ENCODE measurements at regions of chr2 and their contacts with region 1.

Region 1: GRCh38 chr2:233251306-233252116 is at the start of gene ATG16L1:
- DNase-seq: peak; percentile 96 to 98 (median 97)
- H3K4me3 ChIP-seq: peak within 1 kb of the TSS; percentile 26 to 84 (median 50)
- H3K27ac ChIP-seq: peak within 1 kb of the TSS; percentile 59 to 93 (median 83)
- H3K4me1 ChIP-seq: peaks cover 7 to 24% of the 10 kb centered on the region in 2 donors
- H3K27me3 ChIP-seq: no peaks in the 10 kb centered on the region
- CTCF ChIP-seq: peak; percentile 81 to 94 (median 91)
- POLR2A ChIP-seq: peak; percentile 75 to 87
- total RNA-seq, gene ATG16L1: 10.9 to 37.7 (median 23.0) TPM

Region 2: DNA sequence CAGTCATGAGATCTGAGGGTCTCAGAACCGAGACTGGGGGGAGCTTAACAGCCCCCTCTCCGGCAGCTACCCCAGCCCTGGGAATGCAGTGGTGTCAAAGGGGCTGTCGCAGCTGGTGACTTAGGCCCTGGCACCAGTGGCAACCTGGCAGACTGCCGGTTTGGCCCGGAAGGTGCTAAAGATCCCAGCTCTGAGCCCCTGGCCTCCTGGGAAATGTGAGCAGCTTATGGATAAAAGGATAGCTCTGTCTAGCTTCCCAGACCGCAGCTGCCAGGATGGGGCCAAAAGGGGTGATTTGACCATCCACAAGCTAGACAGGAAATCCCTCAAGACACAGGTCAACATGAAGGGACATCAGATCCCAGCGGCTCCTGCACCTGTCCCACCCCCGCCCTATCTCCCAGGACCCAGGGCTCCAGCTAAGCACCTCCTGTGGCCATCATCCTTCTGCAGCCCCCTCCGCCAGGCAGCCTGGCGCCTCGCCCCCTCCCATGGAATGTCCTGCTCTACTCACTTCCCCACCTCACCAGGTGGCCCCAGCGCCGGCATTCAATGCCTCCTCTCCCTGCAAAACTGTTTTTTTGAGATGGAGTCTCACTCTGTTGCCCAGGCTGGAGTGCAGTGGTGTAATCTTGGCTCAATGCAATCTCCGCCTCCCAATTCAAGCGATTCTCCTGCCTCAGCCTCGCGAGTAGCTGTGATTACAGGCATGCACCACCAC is 651.3 kb before region 1 on chr2:
- intact Hi-C with region 1: loop called in 1 of 2 experiments (anchors 10 kb)
- DNase-seq: no peak
- H3K4me3 ChIP-seq: no peak overlapping the region
- H3K27ac ChIP-seq: no peak overlapping the region
- H3K4me1 ChIP-seq: no peaks in the 10 kb centered on the region
- H3K27me3 ChIP-seq: no peaks in the 10 kb centered on the region
- CTCF ChIP-seq: no peak
- POLR2A ChIP-seq: no peak

Region 3: GRCh38 chr2:233061591-233062450 is 189.7 kb before region 1 on chr2:
- intact Hi-C with region 1: loop called in 1 of 2 experiments (anchors 10 kb)
- DNase-seq: peak in 5 of 7 donors; percentile 36 to 70 (median 42)
- H3K4me3 ChIP-seq: peak overlapping the region in 1 of 4 donors; percentile 55
- H3K27ac ChIP-seq: peak overlapping the region in 4 of 5 donors; percentile 26 to 89 (median 56)
- H3K4me1 ChIP-seq: no peaks in the 10 kb centered on the region
- H3K27me3 ChIP-seq: no peaks in the 10 kb centered on the region
- CTCF ChIP-seq: peak in 1 of 6 experiments; percentile 31
- POLR2A ChIP-seq: no peak

Region 4: DNA sequence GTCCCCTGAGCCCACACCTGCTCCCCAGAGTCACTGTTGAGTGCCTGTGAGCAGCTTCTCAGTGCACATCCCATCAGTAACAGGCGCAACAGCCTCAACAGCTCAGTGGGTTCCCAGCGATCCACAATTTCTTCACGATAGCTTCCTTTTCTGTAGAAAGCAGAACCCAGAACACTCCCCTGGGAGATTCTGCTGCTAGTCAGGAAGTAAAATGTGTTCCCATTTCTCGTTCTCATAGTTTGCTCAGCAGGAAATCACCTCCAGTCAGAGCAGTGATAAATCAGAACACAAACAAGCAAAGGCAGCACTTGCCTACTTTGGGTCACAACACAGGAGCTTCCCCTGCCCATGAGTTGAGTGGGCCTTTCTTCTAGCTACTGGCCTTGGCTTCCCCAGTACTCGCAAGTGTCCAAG is 49.0 kb before region 1 on chr2:
- intact Hi-C with region 1: no loop called
- DNase-seq: peak in 2 of 7 donors; percentile 19 to 54
- H3K4me3 ChIP-seq: no peak overlapping the region
- H3K27ac ChIP-seq: peak overlapping the region in 1 of 5 donors; percentile 29
- H3K4me1 ChIP-seq: no peaks in the 10 kb centered on the region
- H3K27me3 ChIP-seq: no peaks in the 10 kb centered on the region
- CTCF ChIP-seq: no peak
- POLR2A ChIP-seq: no peak

Measured in adrenal gland (tissue), 19 donors.